ENCODE measurements at regions of chr10 and their contacts with region 1.

Region 1: DNA sequence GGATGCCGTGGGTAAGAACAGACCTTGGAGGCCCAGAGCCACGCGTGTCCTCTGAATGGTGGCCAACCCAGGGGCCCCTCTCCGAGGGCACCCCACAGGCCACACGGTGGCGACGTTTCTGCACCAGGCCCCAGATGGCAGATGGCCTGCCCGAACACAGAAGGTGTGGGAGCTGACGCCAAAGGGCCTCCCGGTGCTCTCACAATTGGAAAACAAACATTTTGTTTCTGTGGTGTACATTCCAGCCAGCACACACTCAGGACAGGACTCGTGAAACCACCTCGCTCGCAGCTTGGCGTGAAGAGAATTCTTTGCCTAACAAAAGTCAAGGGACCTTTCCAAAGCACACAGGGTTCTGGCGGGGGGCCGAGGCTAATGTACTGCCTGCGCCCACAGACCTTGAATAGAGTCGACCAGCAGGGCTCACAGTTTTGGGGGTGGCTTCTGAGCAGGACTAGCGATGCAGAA is 112.1 kb downstream of the FAM53B start:
- DNase-seq: peak; percentile 69 to 77
- ATAC-seq: peak; percentile 62 to 63
- H3K4me3 ChIP-seq: no peak overlapping the region
- H3K27ac ChIP-seq: peak overlapping the region; percentile 36 to 88 (median 77)
- H3K4me1 ChIP-seq: peaks cover 61 to 66% of the 10 kb centered on the region in 2 donors
- H3K27me3 ChIP-seq: no peaks in the 10 kb centered on the region
- CTCF ChIP-seq: peak; percentile 43 to 75 (median 68)
- POLR2A ChIP-seq: no peak

Region 2: DNA sequence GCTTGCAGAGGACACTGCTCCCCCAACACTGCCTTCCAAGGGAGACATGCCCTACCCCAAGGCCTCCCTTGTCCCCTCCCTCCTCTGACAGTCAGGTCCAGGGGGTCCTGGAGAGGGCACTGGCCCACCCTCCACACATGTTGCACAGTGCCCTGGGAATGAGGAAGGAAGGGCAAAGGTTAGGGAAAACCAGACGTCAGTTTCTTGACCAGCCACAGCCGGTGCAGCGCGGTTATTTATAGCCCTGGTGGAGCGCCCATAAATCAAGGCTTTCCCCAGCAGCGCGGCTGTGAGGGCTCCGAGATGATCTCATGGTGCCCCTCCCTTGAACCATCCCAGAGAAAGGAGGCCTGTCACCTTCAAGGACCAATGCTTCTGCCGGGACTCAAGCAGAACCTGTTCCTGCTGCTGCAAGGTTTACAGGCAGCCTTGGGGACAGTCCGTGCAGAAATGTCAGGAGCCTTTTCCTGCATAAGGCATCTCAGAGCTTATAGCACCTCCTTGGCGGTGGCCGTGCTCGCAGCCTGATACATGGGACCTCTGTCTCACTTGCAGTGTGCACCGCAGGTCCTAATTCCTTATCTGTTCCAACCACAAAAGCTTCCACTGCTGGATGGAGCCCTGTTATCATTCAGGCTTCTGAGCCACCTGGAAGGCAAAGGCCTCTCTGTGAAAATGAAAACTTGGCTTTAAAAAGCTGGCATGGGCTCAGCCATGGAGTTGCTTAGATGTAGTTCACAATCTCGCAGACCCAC is 43.2 kb before region 1 on chr10:
- in situ Hi-C with region 1: no loop called
- intact Hi-C with region 1: no loop called
- DNase-seq: peak; percentile 70 to 82
- ATAC-seq: peak; percentile 91 to 95
- H3K4me3 ChIP-seq: no peak overlapping the region
- H3K27ac ChIP-seq: peak overlapping the region; percentile 34 to 68 (median 44)
- H3K4me1 ChIP-seq: peaks cover 14 to 20% of the 10 kb centered on the region in 2 donors
- H3K27me3 ChIP-seq: no peaks in the 10 kb centered on the region
- CTCF ChIP-seq: no peak
- POLR2A ChIP-seq: no peak

Region 3: GRCh38 chr10:124665980-124666379 is 33.9 kb after region 1 on chr10:
- in situ Hi-C with region 1: no loop called
- intact Hi-C with region 1: loop called (anchors 5 kb)
- DNase-seq: no peak
- ATAC-seq: no peak
- H3K4me3 ChIP-seq: no peak overlapping the region
- H3K27ac ChIP-seq: no peak overlapping the region
- H3K4me1 ChIP-seq: peaks cover 46 to 67% of the 10 kb centered on the region in 2 donors
- H3K27me3 ChIP-seq: no peaks in the 10 kb centered on the region
- CTCF ChIP-seq: no peak
- POLR2A ChIP-seq: no peak

Region 4: GRCh38 chr10:124827474-124827873 is 195.4 kb after region 1 on chr10:
- in situ Hi-C with region 1: no loop called
- intact Hi-C with region 1: loop called (anchors 5 kb)
- DNase-seq: no peak
- ATAC-seq: no peak
- H3K4me3 ChIP-seq: no peak overlapping the region
- H3K27ac ChIP-seq: no peak overlapping the region
- H3K4me1 ChIP-seq: peaks cover 6 to 8% of the 10 kb centered on the region in 2 donors
- H3K27me3 ChIP-seq: no peaks in the 10 kb centered on the region
- CTCF ChIP-seq: peak in 4 of 5 experiments; percentile 34 to 62 (median 58)
- POLR2A ChIP-seq: no peak

Measured in gastrocnemius medialis (tissue), 4 donors.